ENCODE measurements at regions of chr22 and their contacts with region 1.

Region 1: DNA sequence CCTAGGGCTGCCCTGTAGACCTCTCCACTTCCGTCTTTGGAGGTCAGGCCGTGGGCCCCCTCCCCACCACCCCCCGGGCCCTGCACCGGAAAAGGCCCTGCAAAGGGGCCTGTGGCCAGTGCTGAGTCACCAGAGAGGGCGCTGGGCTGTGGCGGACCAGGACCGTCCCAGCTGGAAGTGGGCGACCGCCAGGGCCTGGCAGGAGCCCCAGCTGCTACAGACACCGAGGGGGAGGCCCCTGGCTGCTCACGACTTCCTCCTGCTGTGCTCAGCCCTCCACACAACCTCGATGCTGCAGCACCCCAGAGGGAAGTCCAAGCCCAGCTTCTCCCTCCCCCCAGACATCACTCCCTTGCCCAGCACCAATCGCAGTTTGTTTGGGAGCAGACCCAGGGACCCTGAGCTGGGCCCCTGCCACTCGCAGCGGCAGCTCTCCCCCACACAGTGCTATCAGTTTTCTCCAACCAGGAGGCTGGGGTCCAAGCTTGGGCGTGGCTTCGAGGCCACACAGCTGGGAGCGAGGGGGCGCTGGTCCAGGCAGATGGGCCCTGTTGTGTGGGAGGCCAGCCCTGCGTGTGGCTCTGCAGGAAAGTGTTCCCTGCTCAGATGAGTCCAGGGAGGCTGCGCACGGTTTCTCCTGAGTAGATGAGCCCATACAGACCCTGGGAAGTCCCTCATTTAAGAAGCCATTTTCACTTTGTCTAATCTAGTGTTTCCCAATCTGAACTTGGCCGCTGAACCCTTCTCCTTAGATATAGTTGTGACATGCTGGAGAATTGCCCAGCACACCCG is 5.6 kb upstream of the SH3BP1 start:
- DNase-seq: peak; percentile 41 to 70
- H3K4me3 ChIP-seq: peak overlapping the region in 1 of 4 experiments; percentile 28; a peak in 3 of 8 replicates
- H3K27ac ChIP-seq: peak overlapping the region; percentile 65; the same call in 1 of the 2 replicates
- H3K4me1 ChIP-seq: peaks cover 5 to 27% (median 21%) of the 10 kb centered on the region in 4 experiments
- H3K27me3 ChIP-seq: no peaks in the 10 kb centered on the region
- CTCF ChIP-seq: peak; percentile 4 to 34 (median 27); a peak in 3 of 4 replicates
- EP300 ChIP-seq: no peak; a peak in 1 of 3 replicates
- POLR2A ChIP-seq: peak in 1 of 2 experiments; percentile 48; a peak in 2 of 3 replicates
- RAD21 ChIP-seq: no peak

Region 2: GRCh38 chr22:37578002-37578401 is 55.8 kb before region 1 on chr22:
- CTCF ChIA-PET with region 1: no interaction called
- POLR2A ChIA-PET with region 1: no interaction called
- DNase-seq: no peak
- H3K4me3 ChIP-seq: no peak overlapping the region
- H3K27ac ChIP-seq: no peak overlapping the region
- H3K4me1 ChIP-seq: no peaks in the 10 kb centered on the region
- H3K27me3 ChIP-seq: no peaks in the 10 kb centered on the region
- CTCF ChIP-seq: no peak
- EP300 ChIP-seq: no peak
- POLR2A ChIP-seq: no peak
- RAD21 ChIP-seq: no peak

Region 3: DNA sequence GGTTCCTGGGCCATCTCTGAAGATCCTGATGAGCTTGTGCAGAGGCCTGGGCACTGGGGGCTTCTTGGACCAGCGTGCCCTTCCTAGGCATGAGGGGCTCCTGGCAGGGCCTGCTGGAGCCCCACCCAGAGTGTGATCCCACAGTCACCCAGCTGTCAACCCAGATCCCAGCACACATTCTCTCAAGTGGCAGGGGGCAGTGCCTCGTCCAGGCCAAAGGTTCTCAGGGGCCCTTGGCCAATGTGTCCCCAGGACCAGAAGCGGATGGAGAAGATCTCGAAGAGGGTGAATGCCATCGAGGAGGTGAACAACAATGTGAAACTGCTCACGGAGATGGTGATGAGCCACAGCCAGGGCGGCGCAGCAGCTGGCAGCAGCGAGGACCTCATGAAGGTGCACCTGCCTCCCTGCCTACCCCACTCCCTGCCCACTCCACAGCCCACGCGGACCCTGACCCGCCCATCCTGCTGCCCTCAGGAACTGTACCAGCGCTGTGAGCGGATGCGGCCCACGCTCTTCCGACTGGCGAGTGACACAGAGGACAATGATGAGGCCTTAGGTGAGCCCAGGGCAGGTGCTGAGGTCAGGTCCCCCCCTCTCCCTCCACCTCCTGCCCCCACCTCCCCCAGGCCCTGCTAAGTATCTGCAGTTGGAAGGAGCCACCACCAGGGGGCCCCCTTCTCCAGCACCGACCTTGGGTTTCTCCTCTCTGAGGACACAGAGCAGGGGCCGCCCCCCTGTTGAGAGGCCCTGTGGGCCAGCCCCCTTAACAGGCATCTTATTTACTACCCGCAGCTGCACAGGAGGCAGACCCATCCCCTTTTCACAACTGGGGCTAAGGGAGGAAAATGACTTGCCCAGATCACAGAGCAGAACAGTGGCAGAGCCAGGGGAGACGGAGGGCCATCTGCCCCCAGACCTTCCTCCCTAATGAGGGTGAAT is 10.5 kb before region 1 on chr22:
- CTCF ChIA-PET with region 1: interaction called, 42 read pairs
- POLR2A ChIA-PET with region 1: interaction called, 14 read pairs
- DNase-seq: peak in 1 of 2 experiments; percentile 95
- H3K4me3 ChIP-seq: no peak overlapping the region
- H3K27ac ChIP-seq: no peak overlapping the region
- H3K4me1 ChIP-seq: peaks cover 0 to 3% (median 0%) of the 10 kb centered on the region in 4 experiments; a peak in 3 of 7 replicates
- H3K27me3 ChIP-seq: no peaks in the 10 kb centered on the region
- CTCF ChIP-seq: peak; percentile 50 to 72 (median 69)
- EP300 ChIP-seq: no peak
- POLR2A ChIP-seq: no peak
- RAD21 ChIP-seq: peak; percentile 60 to 72

Region 4: DNA sequence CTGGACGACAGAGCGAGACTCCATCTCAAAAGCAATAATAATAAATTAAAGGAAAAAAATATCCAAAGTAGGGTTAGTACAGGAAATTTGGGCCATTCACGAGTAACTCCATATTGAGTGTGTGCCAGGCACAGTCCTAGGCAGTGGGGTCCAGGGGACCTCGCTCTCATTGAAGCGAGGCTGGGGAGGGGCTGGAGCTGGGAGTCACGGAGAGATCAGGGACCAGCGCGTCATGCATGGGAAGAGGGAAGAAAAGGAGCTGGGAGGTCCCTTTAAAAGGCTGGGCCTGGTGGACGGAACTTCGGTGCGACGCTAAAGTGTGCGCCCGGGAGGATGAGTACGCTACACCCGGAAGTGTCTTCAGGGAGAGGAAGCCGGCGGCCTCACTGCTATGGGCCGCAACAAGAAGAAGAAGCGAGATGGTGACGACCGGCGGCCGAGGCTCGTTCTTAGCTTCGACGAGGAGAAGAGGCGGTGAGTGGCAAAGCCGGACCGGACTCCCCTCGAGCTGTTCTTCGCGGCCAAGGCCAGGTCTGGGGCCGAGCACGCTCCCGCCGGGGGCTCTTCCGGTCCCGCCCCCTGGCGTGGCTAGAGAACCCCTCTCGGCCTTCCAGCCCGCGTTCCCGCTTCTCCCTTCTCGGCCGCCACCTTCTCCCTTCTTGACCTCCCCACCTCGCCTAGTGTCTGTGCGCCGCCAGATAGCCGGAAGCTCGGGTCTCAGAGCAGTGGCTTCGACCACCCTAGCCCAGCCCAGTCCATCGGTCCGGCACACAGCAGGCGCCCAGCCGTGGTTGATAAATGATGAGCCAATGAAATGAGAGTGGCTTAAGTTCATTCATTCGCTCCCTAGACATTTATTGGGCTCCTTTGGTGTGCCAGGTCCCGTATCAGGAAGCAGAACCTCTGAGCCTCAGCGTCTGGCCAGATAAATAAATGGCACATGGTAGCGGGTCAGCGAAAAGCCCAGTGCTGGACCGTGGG is 52.5 kb after region 1 on chr22 and contains the start of gene NOL12:
- CTCF ChIA-PET with region 1: interaction called, 261 read pairs
- POLR2A ChIA-PET with region 1: interaction called, 7 read pairs
- DNase-seq: peak; percentile 69 to 91
- H3K4me3 ChIP-seq: peak within 1 kb of the TSS; percentile 62 to 97 (median 87)
- H3K27ac ChIP-seq: peak within 1 kb of the TSS; percentile 88
- H3K4me1 ChIP-seq: peaks cover 0 to 6% (median 2%) of the 10 kb centered on the region in 4 experiments; a peak in 4 of 7 replicates
- H3K27me3 ChIP-seq: no peaks in the 10 kb centered on the region
- CTCF ChIP-seq: no peak
- EP300 ChIP-seq: no peak
- POLR2A ChIP-seq: peak in 1 of 2 experiments; percentile 88; a peak in 2 of 3 replicates
- RAD21 ChIP-seq: no peak
- total RNA-seq, gene NOL12: 26.7 and 28.3 TPM in 2 replicates